ENCODE measurements at regions of chr3 and their contacts with region 1.

Region 1: DNA sequence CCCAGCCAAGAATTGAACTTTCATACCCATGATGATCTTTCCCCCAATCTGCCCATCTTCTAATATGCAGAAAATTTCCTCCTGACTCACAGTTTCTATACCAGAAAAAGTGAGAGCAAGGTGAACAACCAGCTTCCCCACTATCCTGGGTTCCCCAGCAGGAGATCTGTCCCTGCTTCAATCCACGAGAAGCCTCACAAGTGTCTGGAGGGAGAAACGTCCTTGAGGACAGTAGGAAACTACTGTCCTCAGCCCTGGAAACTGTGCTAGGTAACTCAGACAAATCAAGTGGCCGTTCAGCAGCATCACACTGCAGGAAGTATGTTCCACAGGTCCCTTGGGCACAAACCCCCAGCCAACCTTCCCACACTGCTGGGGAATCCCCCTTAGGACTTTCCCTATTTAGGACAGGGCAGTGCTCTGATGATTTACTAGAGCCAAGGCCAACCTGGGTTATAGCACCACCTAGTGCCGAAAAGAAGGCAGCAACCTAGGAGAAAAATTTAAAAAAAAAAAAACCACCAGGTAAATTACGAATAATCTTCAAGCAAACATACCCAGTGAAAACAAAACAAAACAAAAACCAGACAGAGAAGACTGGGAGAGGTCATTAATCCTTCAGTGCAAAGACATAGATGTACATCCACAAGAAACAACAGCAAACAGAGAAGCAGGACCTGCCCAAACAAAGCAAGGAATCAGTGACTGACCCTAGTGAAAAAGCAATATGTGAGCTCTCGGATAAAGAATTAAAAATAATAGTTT is 36.0 kb downstream of the MORC1 start:
- DNase-seq: peak in 2 of 9 donors; percentile 14 to 30
- ATAC-seq: peak; percentile 84
- H3K4me3 ChIP-seq: no peak overlapping the region
- H3K4me3 Mint-ChIP-seq: no peak overlapping the region
- H3K27ac ChIP-seq: no peak overlapping the region
- H3K27ac Mint-ChIP-seq: peak overlapping the region in 1 of 9 donors; percentile 48
- H3K4me1 ChIP-seq: no peaks in the 10 kb centered on the region
- H3K4me1 Mint-ChIP-seq: peaks cover 0 to 3% (median 0%) of the 10 kb centered on the region in 7 donors
- H3K27me3 ChIP-seq: no peaks in the 10 kb centered on the region
- H3K27me3 Mint-ChIP-seq: peaks cover 25 to 54% (median 33%) of the 10 kb centered on the region in 5 donors

Region 2: DNA sequence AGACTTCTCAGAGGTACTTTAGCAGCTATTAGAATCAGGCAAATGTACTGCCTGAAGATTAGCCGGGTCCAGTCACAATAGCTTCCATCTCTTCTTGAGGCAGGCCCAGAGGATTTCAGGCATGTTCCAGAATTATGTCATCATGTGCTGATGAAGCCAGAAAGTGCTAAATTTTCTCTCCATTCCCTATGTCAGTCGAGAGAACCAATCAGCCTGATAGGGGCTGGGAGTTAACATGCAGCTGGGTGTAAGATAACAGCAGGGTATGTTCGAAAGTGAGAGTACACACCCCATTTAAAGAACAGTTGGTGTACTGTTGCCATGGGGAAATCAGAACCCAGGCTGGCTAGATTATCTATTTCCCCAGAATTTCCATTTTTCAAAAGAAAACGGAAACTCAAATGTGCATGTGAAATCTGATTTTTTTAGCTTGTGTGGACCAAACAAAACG is 620.2 kb before region 1 on chr3:
- CTCF ChIA-PET with region 1: no interaction called
- POLR2A ChIA-PET with region 1: no interaction called
- intact Hi-C with region 1: no loop called
- DNase-seq: no peak
- ATAC-seq: no peak
- H3K4me3 ChIP-seq: no peak overlapping the region
- H3K4me3 Mint-ChIP-seq: no peak overlapping the region
- H3K27ac ChIP-seq: no peak overlapping the region
- H3K27ac Mint-ChIP-seq: no peak overlapping the region
- H3K4me1 ChIP-seq: no peaks in the 10 kb centered on the region
- H3K4me1 Mint-ChIP-seq: no peaks in the 10 kb centered on the region
- H3K27me3 ChIP-seq: no peaks in the 10 kb centered on the region
- H3K27me3 Mint-ChIP-seq: peaks cover 0 to 11% (median 2%) of the 10 kb centered on the region in 5 donors

Region 3: GRCh38 chr3:108489771-108490170 is 592.2 kb before region 1 on chr3:
- CTCF ChIA-PET with region 1: no interaction called
- POLR2A ChIA-PET with region 1: no interaction called
- intact Hi-C with region 1: loop called (anchors 1 kb)
- DNase-seq: peak in 7 of 9 donors; percentile 43 to 64 (median 54)
- ATAC-seq: peak; percentile 86
- H3K4me3 ChIP-seq: no peak overlapping the region
- H3K4me3 Mint-ChIP-seq: no peak overlapping the region
- H3K27ac ChIP-seq: no peak overlapping the region
- H3K27ac Mint-ChIP-seq: no peak overlapping the region
- H3K4me1 ChIP-seq: no peaks in the 10 kb centered on the region
- H3K4me1 Mint-ChIP-seq: peaks cover 0 to 3% (median 0%) of the 10 kb centered on the region in 7 donors
- H3K27me3 ChIP-seq: no peaks in the 10 kb centered on the region
- H3K27me3 Mint-ChIP-seq: peaks cover 0 to 13% (median 0%) of the 10 kb centered on the region in 5 donors

Region 4: DNA sequence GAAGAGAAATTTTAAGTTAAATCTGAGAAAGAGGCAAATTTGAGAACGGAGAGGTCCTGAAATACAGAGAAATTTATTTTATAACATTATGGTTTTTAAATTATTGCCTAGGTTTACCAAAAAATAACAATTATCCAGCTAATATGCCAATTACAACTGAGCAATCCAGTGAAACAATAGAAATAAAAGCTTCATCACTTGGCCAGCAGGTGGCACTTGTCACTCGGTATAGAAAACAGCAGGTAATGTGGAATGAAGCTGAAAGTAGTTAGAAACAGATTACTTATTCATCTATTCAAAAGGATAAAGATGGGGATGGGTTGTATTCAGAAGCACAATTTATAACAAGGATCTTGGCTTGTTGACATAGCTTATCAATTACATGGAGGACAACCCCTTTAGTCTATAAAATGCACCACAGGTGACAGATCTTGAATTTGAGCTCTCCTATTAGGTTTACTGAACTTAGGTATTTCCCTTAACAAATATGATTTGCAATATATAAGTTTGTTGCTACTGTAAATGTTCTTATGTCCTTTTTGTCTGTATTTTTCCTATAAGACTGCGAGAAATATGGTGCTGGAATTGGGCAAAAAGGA is 58.2 kb before region 1 on chr3:
- CTCF ChIA-PET with region 1: interaction called, 5 read pairs
- POLR2A ChIA-PET with region 1: no interaction called
- intact Hi-C with region 1: loop called (anchors 1 to 2 kb)
- DNase-seq: peak in 6 of 9 donors; percentile 2 to 42 (median 32)
- ATAC-seq: peak; percentile 60
- H3K4me3 ChIP-seq: no peak overlapping the region
- H3K4me3 Mint-ChIP-seq: no peak overlapping the region
- H3K27ac ChIP-seq: no peak overlapping the region
- H3K27ac Mint-ChIP-seq: no peak overlapping the region
- H3K4me1 ChIP-seq: no peaks in the 10 kb centered on the region
- H3K4me1 Mint-ChIP-seq: no peaks in the 10 kb centered on the region
- H3K27me3 ChIP-seq: no peaks in the 10 kb centered on the region
- H3K27me3 Mint-ChIP-seq: peaks cover 0 to 18% (median 0%) of the 10 kb centered on the region in 5 donors

Region 5: DNA sequence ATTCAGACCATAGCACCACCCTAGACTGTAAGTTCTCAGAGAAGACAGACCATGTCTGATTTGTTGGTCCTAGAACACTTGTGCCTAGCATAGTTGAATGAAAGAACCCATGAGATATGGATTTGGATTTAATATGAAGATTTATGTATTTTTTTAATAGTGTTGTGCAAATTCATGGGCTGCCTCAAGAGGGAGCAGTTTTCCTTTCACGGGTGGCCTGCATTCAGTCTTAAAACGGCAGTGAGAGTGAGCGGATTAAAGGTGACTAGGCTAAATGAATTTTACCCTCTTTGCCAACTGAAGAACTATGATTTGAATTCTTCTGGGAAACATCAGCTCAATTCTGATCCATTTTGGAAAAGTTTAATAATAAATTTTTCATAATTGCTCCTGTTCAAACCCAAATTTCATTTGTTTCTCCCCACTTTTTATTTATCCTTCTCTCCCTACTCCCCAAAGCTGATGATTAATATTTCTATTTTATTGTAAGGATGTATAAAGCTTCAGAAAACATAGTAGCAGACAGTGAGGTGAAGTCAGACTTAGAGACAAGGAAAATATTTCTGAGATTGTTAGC is 31.2 kb before region 1 on chr3:
- CTCF ChIA-PET with region 1: no interaction called
- POLR2A ChIA-PET with region 1: no interaction called
- intact Hi-C with region 1: loop called in 1 of 2 experiments (anchors 1 kb)
- DNase-seq: peak in 4 of 9 donors; percentile 3 to 23 (median 4)
- ATAC-seq: peak; percentile 46
- H3K4me3 ChIP-seq: no peak overlapping the region
- H3K4me3 Mint-ChIP-seq: no peak overlapping the region
- H3K27ac ChIP-seq: no peak overlapping the region
- H3K27ac Mint-ChIP-seq: no peak overlapping the region
- H3K4me1 ChIP-seq: no peaks in the 10 kb centered on the region
- H3K4me1 Mint-ChIP-seq: no peaks in the 10 kb centered on the region
- H3K27me3 ChIP-seq: no peaks in the 10 kb centered on the region
- H3K27me3 Mint-ChIP-seq: peaks cover 0 to 9% (median 4%) of the 10 kb centered on the region in 5 donors

Measured in naive thymus-derived CD4-positive, alpha-beta T cell (primary cell).